PC-3 (cell line): ENCODE measurements at regions of chr12 and their contacts with region 1.

Region 1: GRCh38 chr12:87157791-87158190 is 871.4 kb downstream of the C12orf50 start:
- DNase-seq: peak; percentile 95
- ATAC-seq: peak; percentile 78
- H3K4me3 ChIP-seq: no peak overlapping the region
- H3K27ac ChIP-seq: peak overlapping the region; percentile 67
- H3K4me1 ChIP-seq: peaks cover 30% of the 10 kb centered on the region
- H3K27me3 ChIP-seq: no peaks in the 10 kb centered on the region
- CTCF ChIP-seq: no peak

Region 2: DNA sequence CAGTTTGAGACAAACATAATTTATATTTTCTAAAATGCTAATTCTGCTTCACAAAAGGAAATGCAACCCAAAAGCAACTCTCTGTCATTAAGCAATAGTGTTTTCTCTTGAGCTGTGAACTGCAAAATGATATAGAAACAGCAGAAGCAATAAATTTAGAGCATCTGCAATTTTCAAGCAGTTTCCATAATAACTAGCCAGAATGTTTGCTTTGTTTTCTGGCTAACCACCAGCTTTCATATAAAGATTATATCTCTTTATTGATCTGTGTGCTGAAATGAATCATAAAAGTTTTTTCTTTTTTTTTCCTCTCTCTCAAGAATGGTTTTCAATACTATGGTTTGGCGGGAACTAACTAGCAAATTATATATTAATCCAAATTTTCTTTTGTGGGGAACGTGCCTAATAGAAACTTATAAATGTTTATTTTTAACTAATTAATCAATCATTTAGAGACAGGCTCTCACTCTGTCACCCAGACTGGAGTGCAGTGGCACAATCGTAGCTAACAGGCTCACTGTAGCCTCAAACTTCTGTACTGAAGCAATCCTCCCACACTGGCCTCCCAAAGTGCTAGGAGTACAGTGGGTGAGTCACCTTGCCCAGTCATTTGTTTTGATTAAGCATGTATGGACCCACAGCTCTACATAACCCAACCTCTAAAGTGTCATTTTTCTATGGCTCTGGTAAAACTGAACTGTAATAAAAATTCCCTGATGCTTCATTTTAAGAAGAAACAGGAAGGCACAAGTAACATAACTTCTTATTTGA is 71.5 kb before region 1 on chr12:
- CTCF ChIA-PET with region 1: no interaction called
- POLR2A ChIA-PET with region 1: no interaction called
- intact Hi-C with region 1: loop called (anchors 2 kb)
- DNase-seq: peak; percentile 79
- ATAC-seq: peak; percentile 98
- H3K4me3 ChIP-seq: no peak overlapping the region
- H3K27ac ChIP-seq: peak overlapping the region; percentile 79
- H3K4me1 ChIP-seq: peaks cover 21% of the 10 kb centered on the region
- H3K27me3 ChIP-seq: no peaks in the 10 kb centered on the region
- CTCF ChIP-seq: no peak

Region 3: DNA sequence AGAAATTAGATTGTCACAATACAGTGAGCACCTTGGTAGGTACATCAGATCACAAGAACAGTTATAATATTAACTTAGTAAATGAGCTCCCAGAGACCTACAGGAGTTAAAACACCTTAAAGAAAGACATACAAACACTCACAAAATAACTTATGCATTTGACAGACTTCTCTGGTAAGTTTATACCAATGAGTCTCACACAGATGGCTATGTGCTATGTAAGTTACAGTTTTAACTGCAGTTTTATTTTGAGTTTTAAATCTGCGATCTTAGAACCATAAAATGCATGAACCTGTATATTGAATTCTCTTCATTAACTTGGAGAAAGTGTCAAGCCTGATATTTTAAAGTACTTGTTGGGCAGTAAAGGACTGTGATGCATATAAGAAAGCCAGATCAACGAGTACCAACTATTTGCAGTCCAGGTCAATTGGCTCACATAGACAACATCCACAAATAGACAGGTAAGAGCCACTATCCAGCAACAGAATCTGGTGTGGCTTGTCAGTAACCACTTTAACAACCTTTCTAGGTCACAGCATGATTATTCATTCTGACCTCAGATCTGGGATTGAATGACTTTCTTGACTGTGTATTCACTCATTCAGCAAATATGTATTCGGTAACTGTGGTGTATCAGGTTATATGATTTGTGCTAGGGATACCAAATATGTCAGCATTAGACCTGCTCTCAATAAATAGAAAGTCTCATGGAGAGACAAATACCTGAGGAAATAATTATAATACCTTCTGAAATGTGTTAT is 45.0 kb before region 1 on chr12:
- CTCF ChIA-PET with region 1: no interaction called
- POLR2A ChIA-PET with region 1: no interaction called
- intact Hi-C with region 1: loop called (anchors 2 kb)
- DNase-seq: peak; percentile 93
- ATAC-seq: peak; percentile 97
- H3K4me3 ChIP-seq: no peak overlapping the region
- H3K27ac ChIP-seq: peak overlapping the region; percentile 25
- H3K4me1 ChIP-seq: peaks cover 15% of the 10 kb centered on the region
- H3K27me3 ChIP-seq: no peaks in the 10 kb centered on the region
- CTCF ChIP-seq: no peak

Region 4: DNA sequence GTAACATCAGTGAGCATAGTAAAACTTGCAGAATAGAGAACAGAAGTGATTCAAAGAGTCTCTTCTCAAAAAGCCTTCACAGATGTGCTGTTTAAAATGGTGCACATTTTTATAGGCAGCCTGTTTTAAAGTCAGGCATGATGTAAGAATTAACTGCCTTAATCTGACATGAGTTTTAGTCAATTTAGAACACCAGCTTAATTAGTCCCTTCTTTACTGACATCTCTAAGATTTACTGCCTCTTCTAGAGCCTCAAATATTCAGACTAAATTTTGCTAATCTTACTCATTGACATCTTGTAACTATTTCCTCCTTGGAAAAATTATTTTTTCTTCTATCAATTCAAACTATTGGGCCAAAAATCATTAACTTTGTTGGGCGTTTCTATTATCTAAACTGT is 88.9 kb after region 1 on chr12:
- CTCF ChIA-PET with region 1: no interaction called
- POLR2A ChIA-PET with region 1: no interaction called
- intact Hi-C with region 1: loop called (anchors 1 kb)
- DNase-seq: no peak
- ATAC-seq: no peak
- H3K4me3 ChIP-seq: no peak overlapping the region
- H3K27ac ChIP-seq: 0 out of 2 replicates have a peak overlapping the region, but pooled peaks have one; percentile 60
- H3K4me1 ChIP-seq: peaks cover 16% of the 10 kb centered on the region
- H3K27me3 ChIP-seq: no peaks in the 10 kb centered on the region
- CTCF ChIP-seq: no peak

Region 5: DNA sequence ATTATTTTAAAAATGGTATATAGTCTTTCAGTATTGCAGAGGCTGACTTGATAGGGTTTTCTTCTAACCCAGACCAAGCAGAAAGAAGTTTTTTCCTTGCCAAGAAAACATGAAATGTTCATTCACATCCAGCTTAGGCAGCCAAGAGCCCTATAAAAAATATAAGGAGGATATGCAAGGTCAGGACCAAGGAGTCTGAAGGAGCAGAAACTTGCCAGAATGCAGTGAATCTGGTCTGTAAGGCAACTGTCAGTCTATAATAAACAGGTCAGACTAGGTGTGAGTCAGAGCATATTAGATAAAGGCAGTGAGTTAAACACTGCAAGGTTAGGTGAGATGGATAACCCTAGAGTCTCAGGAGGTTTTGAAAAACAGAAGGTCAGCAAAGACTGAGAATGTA is 225.9 kb after region 1 on chr12:
- CTCF ChIA-PET with region 1: no interaction called
- POLR2A ChIA-PET with region 1: no interaction called
- intact Hi-C with region 1: no loop called
- DNase-seq: peak; percentile 57
- ATAC-seq: peak; percentile 70
- H3K4me3 ChIP-seq: no peak overlapping the region
- H3K27ac ChIP-seq: no peak overlapping the region
- H3K4me1 ChIP-seq: 0 out of 2 replicates have a peak, but pooled peaks cover 9% of the 10 kb centered on the region
- H3K27me3 ChIP-seq: no peaks in the 10 kb centered on the region
- CTCF ChIP-seq: no peak

Region 6: GRCh38 chr12:87439990-87440827 is 282.4 kb after region 1 on chr12:
- CTCF ChIA-PET with region 1: no interaction called
- POLR2A ChIA-PET with region 1: no interaction called
- intact Hi-C with region 1: loop called (anchors 1 kb)
- DNase-seq: peak; percentile 95
- ATAC-seq: peak; percentile 94
- H3K4me3 ChIP-seq: peak overlapping the region; percentile 7; the same call in 1 of the 2 replicates
- H3K27ac ChIP-seq: peak overlapping the region; percentile 93
- H3K4me1 ChIP-seq: peaks cover 24% of the 10 kb centered on the region
- H3K27me3 ChIP-seq: no peaks in the 10 kb centered on the region
- CTCF ChIP-seq: no peak